Calu3 (cell line): ENCODE measurements at regions of chr11 and their contacts with region 1.

Region 1: DNA sequence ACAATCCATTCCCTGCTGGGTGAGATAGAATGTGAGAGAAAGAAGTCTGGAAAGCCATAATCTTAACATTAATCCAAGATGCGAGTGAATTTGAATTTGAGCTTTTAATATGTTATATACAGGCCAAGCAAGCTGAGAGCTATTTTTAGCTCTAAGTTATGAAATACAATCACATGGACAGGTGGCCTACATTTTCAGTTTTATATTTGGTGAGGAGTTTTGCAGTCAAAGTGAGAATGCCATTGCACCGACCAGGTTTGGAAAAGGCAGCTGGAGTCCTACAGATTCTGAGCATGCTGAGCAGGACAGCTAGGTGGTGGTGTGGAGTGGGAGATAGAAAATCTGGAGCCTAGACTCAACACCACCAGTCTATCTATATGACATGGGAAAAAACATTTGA is 12.0 kb downstream of the OR5B21 start:
- DNase-seq: no peak
- H3K4me3 Mint-ChIP-seq: no peak overlapping the region
- H3K27ac Mint-ChIP-seq: no peak overlapping the region
- H3K4me1 Mint-ChIP-seq: peaks cover 8% of the 10 kb centered on the region
- H3K27me3 Mint-ChIP-seq: no peaks in the 10 kb centered on the region
- CTCF ChIP-seq: no peak

Region 2: DNA sequence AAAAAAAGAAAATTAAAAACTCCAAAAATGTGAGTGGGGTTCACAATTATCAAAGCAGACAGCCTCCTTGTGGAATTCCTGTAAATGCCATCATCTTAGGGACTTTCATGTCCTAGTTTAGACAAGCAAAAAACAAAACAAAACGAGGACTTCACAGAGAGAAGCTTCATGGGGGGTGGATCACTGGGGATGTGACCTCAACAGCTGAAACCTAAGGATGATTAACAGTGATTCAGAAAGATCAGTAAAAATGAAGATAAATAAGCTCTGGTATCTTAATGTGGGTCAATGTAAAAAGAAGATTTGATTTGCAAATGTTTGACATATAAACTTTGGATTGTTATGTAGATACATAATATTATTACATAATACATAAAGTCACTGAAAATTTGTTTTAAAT is 219.8 kb before region 1 on chr11:
- CTCF ChIA-PET with region 1: no interaction called
- intact Hi-C with region 1: no loop called
- DNase-seq: no peak
- H3K4me3 Mint-ChIP-seq: no peak overlapping the region
- H3K27ac Mint-ChIP-seq: no peak overlapping the region
- H3K4me1 Mint-ChIP-seq: no peaks in the 10 kb centered on the region
- H3K27me3 Mint-ChIP-seq: no peaks in the 10 kb centered on the region
- CTCF ChIP-seq: no peak

Region 3: DNA sequence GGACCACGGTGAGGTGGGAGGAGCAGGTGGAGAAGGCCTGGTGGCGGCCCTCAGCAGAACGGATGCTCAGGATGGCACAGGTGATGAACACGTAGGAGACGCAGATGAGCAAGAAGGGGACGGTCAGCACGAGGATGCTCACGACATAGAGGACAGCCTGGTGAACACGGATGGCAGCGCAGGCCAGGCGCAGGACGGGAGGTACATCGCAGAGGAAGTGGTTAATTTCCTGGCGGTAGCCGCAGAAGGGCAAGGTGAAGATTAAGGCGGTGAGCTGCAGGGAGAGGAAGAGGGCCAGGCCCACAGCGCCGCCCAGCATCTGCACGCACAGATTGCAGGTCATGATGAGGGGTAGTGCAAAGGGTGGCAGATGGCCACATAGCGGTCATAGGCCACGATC is 203.9 kb before region 1 on chr11:
- CTCF ChIA-PET with region 1: no interaction called
- intact Hi-C with region 1: loop called (anchors 10 kb)
- DNase-seq: no peak
- H3K4me3 Mint-ChIP-seq: no peak overlapping the region
- H3K27ac Mint-ChIP-seq: no peak overlapping the region
- H3K4me1 Mint-ChIP-seq: no peaks in the 10 kb centered on the region
- H3K27me3 Mint-ChIP-seq: no peaks in the 10 kb centered on the region
- CTCF ChIP-seq: no peak

Region 4: GRCh38 chr11:58465690-58466089 is 30.2 kb before region 1 on chr11:
- CTCF ChIA-PET with region 1: no interaction called
- intact Hi-C with region 1: no loop called
- DNase-seq: no peak
- H3K4me3 Mint-ChIP-seq: no peak overlapping the region
- H3K27ac Mint-ChIP-seq: no peak overlapping the region
- H3K4me1 Mint-ChIP-seq: no peaks in the 10 kb centered on the region
- H3K27me3 Mint-ChIP-seq: no peaks in the 10 kb centered on the region
- CTCF ChIP-seq: no peak

Region 5: DNA sequence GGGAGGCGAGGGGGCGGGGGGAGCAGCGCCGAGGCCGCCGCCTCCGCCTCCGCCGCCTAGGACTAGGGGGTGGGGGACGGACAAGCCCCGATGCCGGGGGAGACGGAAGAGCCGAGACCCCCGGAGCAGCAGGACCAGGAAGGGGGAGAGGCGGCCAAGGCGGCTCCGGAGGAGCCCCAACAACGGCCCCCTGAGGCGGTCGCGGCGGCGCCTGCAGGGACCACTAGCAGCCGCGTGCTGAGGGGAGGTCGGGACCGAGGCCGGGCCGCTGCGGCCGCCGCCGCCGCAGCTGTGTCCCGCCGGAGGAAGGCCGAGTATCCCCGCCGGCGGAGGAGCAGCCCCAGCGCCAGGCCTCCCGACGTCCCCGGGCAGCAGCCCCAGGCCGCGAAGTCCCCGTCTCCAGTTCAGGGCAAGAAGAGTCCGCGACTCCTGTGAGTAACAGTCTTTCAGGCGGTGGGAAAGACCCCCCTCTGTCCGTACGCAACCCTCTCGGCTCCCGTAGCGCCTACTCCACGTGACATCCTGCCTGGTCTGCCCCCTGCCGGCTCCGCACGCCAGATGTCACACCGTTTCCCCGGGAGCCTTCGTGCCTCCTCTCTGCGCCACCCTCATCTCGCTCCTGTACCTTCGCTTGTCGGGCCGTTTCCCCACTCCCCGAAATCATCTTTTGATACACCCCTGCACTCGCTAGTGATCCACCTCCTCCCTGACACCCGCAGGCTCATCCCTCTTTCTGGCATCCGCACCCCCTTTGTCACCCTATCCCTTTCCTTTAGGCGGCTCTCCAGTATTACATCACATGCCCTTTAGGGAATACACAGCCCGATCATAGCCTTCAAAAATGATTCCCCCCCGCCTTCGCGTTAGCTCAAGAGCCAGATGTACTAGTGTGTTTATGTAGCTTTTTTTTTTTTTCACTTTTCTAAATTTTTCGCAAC is 83.6 kb after region 1 on chr11:
- CTCF ChIA-PET with region 1: no interaction called
- intact Hi-C with region 1: no loop called
- DNase-seq: peak; percentile 92
- H3K4me3 Mint-ChIP-seq: peak overlapping the region; percentile 97
- H3K27ac Mint-ChIP-seq: peak overlapping the region; percentile 96
- H3K4me1 Mint-ChIP-seq: peaks cover 26% of the 10 kb centered on the region
- H3K27me3 Mint-ChIP-seq: no peaks in the 10 kb centered on the region
- CTCF ChIP-seq: peak; percentile 85

Region 6: GRCh38 chr11:58592760-58593472 is 97.0 kb after region 1 on chr11:
- CTCF ChIA-PET with region 1: no interaction called
- intact Hi-C with region 1: no loop called
- DNase-seq: no peak
- H3K4me3 Mint-ChIP-seq: peak overlapping the region; percentile 4
- H3K27ac Mint-ChIP-seq: peak overlapping the region; percentile 52
- H3K4me1 Mint-ChIP-seq: peaks cover 27% of the 10 kb centered on the region
- H3K27me3 Mint-ChIP-seq: no peaks in the 10 kb centered on the region
- CTCF ChIP-seq: no peak